Dorsolateral prefrontal cortex (tissue), 120 donors: ENCODE measurements at regions of chr17 and their contacts with region 1.

Region 1: GRCh38 chr17:58517734-58518609 is 3.5 kb upstream of the MTMR4 start:
- DNase-seq: peak; percentile 98 to 100 (median 100)
- H3K4me3 ChIP-seq: peak overlapping the region; percentile 69 to 100 (median 92)
- H3K27ac ChIP-seq: peak overlapping the region; percentile 72 to 100 (median 97)
- H3K27me3 ChIP-seq: no peaks in the 10 kb centered on the region
- CTCF ChIP-seq: no peak

Region 2: DNA sequence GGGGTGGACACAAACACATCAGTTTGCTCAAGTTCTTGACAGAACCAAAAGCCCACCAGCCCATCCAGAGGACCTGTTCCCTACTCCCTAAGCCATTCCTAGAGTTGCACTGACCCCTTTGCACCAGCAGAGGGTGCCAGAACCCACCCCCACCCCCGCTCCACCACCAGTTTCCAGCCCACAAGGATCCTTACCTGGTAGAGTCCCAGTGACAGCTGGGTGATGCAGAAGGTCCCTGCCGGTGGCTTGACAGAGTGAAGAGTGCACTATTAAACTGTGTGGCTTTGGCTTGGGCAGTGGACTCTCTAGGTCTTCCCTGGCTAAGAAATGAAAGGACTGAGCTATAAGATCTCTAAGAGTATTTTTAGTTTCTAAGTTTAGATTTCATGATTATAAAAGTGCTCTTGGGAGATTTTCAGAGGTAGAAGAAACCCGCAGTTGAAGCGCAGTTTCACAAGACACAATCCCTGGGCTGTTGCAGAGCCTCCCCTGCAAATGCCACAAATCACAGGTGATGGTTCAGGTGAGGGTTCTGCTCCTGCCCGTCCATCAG is 69.8 kb after region 1 on chr17:
- intact Hi-C with region 1: loop called in 1 of 2 experiments (anchors 2 kb)
- DNase-seq: peak in 9 of 10 donors; percentile 21 to 62 (median 45)
- H3K4me3 ChIP-seq: peak overlapping the region in 1 of 59 donors; percentile 17
- H3K27ac ChIP-seq: peak overlapping the region in 32 of 59 donors; percentile 6 to 79 (median 52)
- H3K27me3 ChIP-seq: no peaks in the 10 kb centered on the region
- CTCF ChIP-seq: peak; percentile 63 to 96 (median 88)

Region 3: DNA sequence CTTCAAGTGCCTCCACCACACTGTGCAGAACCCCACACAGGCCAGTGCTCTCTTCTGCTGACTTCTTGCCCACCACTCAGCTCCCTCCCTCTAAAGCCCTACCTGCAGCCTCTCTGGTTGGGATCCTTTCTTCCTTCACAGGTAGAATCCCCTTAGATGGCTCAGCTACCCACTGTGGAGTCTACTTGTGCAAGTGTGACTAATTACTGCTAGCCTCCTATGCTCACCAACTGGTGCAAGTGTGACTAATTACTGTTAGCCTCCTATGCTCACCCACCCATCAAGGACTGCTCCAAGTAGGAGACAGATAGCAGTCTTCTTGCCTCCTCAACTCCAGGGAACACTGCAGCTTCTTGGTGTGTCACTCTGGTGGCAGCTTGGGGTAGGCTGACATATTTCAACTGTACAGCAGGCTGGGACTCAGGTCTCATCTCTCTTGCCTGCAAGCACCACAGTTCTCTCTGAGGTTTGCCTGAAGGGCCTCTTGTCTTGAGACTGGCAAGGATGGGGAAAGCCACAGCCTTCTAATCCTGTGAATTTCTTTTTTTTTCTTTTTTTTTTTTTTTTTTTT is 130.3 kb after region 1 on chr17:
- intact Hi-C with region 1: no loop called
- DNase-seq: no peak
- H3K4me3 ChIP-seq: no peak overlapping the region
- H3K27ac ChIP-seq: no peak overlapping the region
- H3K27me3 ChIP-seq: no peaks in the 10 kb centered on the region
- CTCF ChIP-seq: no peak

Region 4: GRCh38 chr17:58692239-58693055 is 174.5 kb after region 1 on chr17 and contains the start of gene RAD51C:
- intact Hi-C with region 1: loop called (anchors 10 kb)
- DNase-seq: peak; percentile 67 to 91 (median 84)
- H3K4me3 ChIP-seq: peak within 1 kb of the TSS; percentile 43 to 98 (median 82)
- H3K27ac ChIP-seq: peak within 1 kb of the TSS; percentile 47 to 96 (median 88)
- H3K27me3 ChIP-seq: no peaks in the 10 kb centered on the region
- CTCF ChIP-seq: peak in 26 of 56 donors; percentile 9 to 51 (median 24)
- total RNA-seq, gene RAD51C: 28.3 to 69.2 (median 44.4) TPM

Region 5: GRCh38 chr17:59106463-59107305 is 588.7 kb after region 1 on chr17 and contains the start of gene TRIM37:
- intact Hi-C with region 1: loop called in 1 of 2 experiments (anchors 5 kb)
- DNase-seq: peak; percentile 89 to 97 (median 96)
- H3K4me3 ChIP-seq: peak within 1 kb of the TSS; percentile 63 to 100 (median 95)
- H3K27ac ChIP-seq: peak within 1 kb of the TSS; percentile 44 to 98 (median 93)
- H3K27me3 ChIP-seq: no peaks in the 10 kb centered on the region
- CTCF ChIP-seq: peak in 45 of 56 donors; percentile 6 to 66 (median 42)
- total RNA-seq, gene TRIM37: 46.6 to 163 (median 113) TPM

Region 6: GRCh38 chr17:59619293-59620063 is 1101.5 kb after region 1 on chr17 and contains the start of gene CLTC:
- intact Hi-C with region 1: loop called in 1 of 2 experiments (anchors 10 kb)
- DNase-seq: peak; percentile 80 to 98 (median 92)
- H3K4me3 ChIP-seq: peak within 1 kb of the TSS; percentile 57 to 98 (median 89)
- H3K27ac ChIP-seq: peak within 1 kb of the TSS; percentile 96 to 100 (median 99)
- H3K27me3 ChIP-seq: no peaks in the 10 kb centered on the region
- CTCF ChIP-seq: peak in 27 of 56 donors; percentile 1 to 51 (median 13)
- total RNA-seq, gene CLTC: 248 to 525 (median 428) TPM